GM13976 (cell line): ENCODE measurements at regions of chr6 and their contacts with region 1.

Region 1: GRCh38 chr6:17086469-17086868 is 15.4 kb upstream of the STMND1 start:
- DNase-seq: peak; percentile 43
- CTCF ChIP-seq: peak; percentile 54

Region 2: GRCh38 chr6:16770701-16771569 is 315.5 kb before region 1 on chr6:
- in situ Hi-C with region 1: loop called (anchors 10 kb)
- DNase-seq: peak; percentile 68
- CTCF ChIP-seq: peak; percentile 93

Region 3: DNA sequence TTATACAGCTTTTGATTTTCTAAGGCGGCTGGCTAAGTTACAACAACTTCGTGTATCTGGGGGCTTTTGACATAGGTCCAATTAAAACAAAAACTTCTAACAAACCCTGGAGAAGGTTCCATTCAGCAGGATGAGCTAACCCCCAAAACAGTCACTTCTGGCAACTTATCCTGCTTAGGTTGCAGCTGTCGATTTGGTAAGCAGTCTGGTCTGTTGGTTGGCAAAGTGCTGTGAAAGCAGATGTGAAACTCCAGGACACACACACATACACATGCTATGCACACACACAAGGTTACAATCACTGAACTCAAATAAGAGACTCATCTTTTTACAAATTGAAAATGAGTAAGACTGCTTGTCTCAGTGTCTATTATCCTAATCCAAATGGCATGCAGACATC is 103.7 kb before region 1 on chr6:
- in situ Hi-C with region 1: loop called (anchors 25 kb)
- DNase-seq: no peak
- CTCF ChIP-seq: no peak